HepG2 (cell line): ENCODE measurements at regions of chr2 and their contacts with region 1.

Region 1: GRCh38 chr2:202577250-202578183 is 57.3 kb upstream of the FAM117B start:
- DNase-seq: peak; percentile 62
- ATAC-seq: peak; percentile 70
- H3K4me3 ChIP-seq: peak overlapping the region in 2 of 3 experiments; percentile 9 to 51; a peak in 1 of 6 replicates
- H3K27ac ChIP-seq: peak overlapping the region; percentile 77
- H3K4me1 ChIP-seq: peaks cover 31% of the 10 kb centered on the region
- H3K27me3 ChIP-seq: no peaks in the 10 kb centered on the region
- CTCF ChIP-seq: no peak
- EP300 ChIP-seq: peak in 1 of 2 experiments; percentile 33; a peak in 1 of 4 replicates
- POLR2A ChIP-seq: no peak
- RAD21 ChIP-seq: 0 out of 2 replicates have a peak, but pooled peaks have one; percentile 16

Region 2: DNA sequence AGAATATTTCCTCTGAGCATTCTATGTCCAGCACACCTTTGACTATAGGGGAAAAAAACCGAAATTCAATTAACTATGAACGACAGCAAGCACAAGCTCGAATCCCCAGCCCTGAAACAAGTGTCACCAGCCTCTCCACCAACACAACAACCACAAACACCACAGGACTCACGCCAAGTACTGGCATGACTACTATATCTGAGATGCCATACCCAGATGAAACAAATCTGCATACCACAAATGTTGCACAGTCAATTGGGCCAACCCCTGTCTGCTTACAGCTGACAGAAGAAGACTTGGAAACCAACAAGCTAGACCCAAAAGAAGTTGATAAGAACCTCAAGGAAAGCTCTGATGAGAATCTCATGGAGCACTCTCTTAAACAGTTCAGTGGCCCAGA is 22.2 kb before region 1 on chr2:
- CTCF ChIA-PET with region 1: no interaction called
- POLR2A ChIA-PET with region 1: no interaction called
- in situ Hi-C with region 1: no loop called
- intact Hi-C with region 1: no loop called
- DNase-seq: no peak
- ATAC-seq: no peak
- H3K4me3 ChIP-seq: no peak overlapping the region
- H3K27ac ChIP-seq: no peak overlapping the region
- H3K4me1 ChIP-seq: no peaks in the 10 kb centered on the region
- H3K27me3 ChIP-seq: no peaks in the 10 kb centered on the region
- CTCF ChIP-seq: no peak
- EP300 ChIP-seq: no peak
- POLR2A ChIP-seq: no peak
- RAD21 ChIP-seq: no peak

Region 3: GRCh38 chr2:202870431-202871299 is 293.1 kb after region 1 on chr2:
- CTCF ChIA-PET with region 1: interaction called, 11 read pairs
- POLR2A ChIA-PET with region 1: no interaction called
- in situ Hi-C with region 1: no loop called
- intact Hi-C with region 1: loop called (anchors 1 kb)
- DNase-seq: peak; percentile 81
- ATAC-seq: peak; percentile 88
- H3K4me3 ChIP-seq: peak overlapping the region; percentile 72 to 88 (median 85)
- H3K27ac ChIP-seq: peak overlapping the region; percentile 51
- H3K4me1 ChIP-seq: peaks cover 6% of the 10 kb centered on the region
- H3K27me3 ChIP-seq: no peaks in the 10 kb centered on the region
- CTCF ChIP-seq: peak; percentile 74
- EP300 ChIP-seq: no peak
- POLR2A ChIP-seq: peak in 1 of 2 experiments; percentile 78; a peak in 3 of 4 replicates
- RAD21 ChIP-seq: peak; percentile 63

Region 4: GRCh38 chr2:203453858-203454451 is 876.4 kb after region 1 on chr2:
- CTCF ChIA-PET with region 1: no interaction called
- POLR2A ChIA-PET with region 1: no interaction called
- in situ Hi-C with region 1: no loop called
- intact Hi-C with region 1: loop called (anchors 2 kb)
- DNase-seq: peak; percentile 61
- ATAC-seq: peak; percentile 89
- H3K4me3 ChIP-seq: no peak overlapping the region
- H3K27ac ChIP-seq: no peak overlapping the region
- H3K4me1 ChIP-seq: peaks cover 7% of the 10 kb centered on the region; the same call in 1 of the 2 replicates
- H3K27me3 ChIP-seq: no peaks in the 10 kb centered on the region
- CTCF ChIP-seq: peak; percentile 78
- EP300 ChIP-seq: no peak
- POLR2A ChIP-seq: no peak
- RAD21 ChIP-seq: 0 out of 2 replicates have a peak, but pooled peaks have one; percentile 47

Region 5: GRCh38 chr2:203909261-203909967 is 1331.9 kb after region 1 on chr2:
- CTCF ChIA-PET with region 1: no interaction called
- POLR2A ChIA-PET with region 1: no interaction called
- in situ Hi-C with region 1: no loop called
- intact Hi-C with region 1: loop called (anchors 5 kb)
- DNase-seq: peak; percentile 41
- ATAC-seq: peak; percentile 92
- H3K4me3 ChIP-seq: peak overlapping the region in 1 of 3 experiments; percentile 9; a peak in 2 of 6 replicates
- H3K27ac ChIP-seq: no peak overlapping the region
- H3K4me1 ChIP-seq: peaks cover 20% of the 10 kb centered on the region; the same call in 1 of the 2 replicates
- H3K27me3 ChIP-seq: no peaks in the 10 kb centered on the region
- CTCF ChIP-seq: peak; percentile 74
- EP300 ChIP-seq: no peak
- POLR2A ChIP-seq: no peak
- RAD21 ChIP-seq: peak; percentile 75; the same call in 1 of the 2 replicates